Transverse colon (tissue), 4 donors: ENCODE measurements at regions of chr9 and their contacts with region 1.

Region 1: DNA sequence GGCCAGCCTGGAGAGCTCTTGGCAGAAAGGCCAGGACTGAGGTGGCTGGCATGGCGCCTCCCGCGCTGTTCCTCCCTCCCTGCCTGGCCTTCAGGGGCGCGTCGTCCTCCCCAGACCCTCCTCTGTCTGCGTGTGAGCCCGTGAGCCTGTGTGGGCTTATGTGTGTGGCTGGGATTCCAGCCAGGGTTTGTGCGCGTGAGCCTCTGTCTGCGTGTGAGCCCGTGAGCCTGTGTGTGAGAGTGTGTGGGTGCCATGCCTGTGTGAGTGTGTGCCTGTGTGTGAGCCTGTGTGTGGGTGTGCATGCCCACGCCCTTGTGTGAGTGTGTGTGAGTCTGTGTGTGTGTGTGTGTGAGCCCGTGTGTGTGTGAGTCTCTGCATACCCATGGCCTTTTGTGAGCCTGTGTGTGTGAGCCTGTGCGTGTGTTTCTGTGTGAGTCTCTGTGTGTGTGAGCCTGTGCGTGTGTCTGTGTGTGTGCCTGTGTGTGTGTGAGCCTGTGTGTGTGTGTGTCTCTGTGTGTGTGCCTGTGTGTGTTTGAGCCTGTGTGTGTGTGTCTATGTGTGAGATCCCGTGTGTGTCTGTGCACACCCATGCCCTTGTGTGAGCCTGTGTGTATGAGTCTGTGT is 13.0 kb downstream of the RXRA start:
- DNase-seq: no peak
- H3K4me3 ChIP-seq: peak overlapping the region in 1 of 4 donors; percentile 11
- H3K27ac ChIP-seq: peak overlapping the region; percentile 26 to 84 (median 38)
- H3K4me1 ChIP-seq: peaks cover 79 to 100% (median 95%) of the 10 kb centered on the region in 4 donors
- H3K27me3 ChIP-seq: no peaks in the 10 kb centered on the region
- CTCF ChIP-seq: no peak
- EP300 ChIP-seq: no peak
- POLR2A ChIP-seq: no peak

Region 2: GRCh38 chr9:134215699-134216448 is 123.4 kb before region 1 on chr9:
- in situ Hi-C with region 1: no loop called
- intact Hi-C with region 1: no loop called
- DNase-seq: no peak
- H3K4me3 ChIP-seq: no peak overlapping the region
- H3K27ac ChIP-seq: peak overlapping the region; percentile 67 to 80 (median 74)
- H3K4me1 ChIP-seq: peaks cover 0 to 11% (median 5%) of the 10 kb centered on the region in 4 donors
- H3K27me3 ChIP-seq: no peaks in the 10 kb centered on the region
- CTCF ChIP-seq: no peak
- EP300 ChIP-seq: no peak
- POLR2A ChIP-seq: no peak

Region 3: DNA sequence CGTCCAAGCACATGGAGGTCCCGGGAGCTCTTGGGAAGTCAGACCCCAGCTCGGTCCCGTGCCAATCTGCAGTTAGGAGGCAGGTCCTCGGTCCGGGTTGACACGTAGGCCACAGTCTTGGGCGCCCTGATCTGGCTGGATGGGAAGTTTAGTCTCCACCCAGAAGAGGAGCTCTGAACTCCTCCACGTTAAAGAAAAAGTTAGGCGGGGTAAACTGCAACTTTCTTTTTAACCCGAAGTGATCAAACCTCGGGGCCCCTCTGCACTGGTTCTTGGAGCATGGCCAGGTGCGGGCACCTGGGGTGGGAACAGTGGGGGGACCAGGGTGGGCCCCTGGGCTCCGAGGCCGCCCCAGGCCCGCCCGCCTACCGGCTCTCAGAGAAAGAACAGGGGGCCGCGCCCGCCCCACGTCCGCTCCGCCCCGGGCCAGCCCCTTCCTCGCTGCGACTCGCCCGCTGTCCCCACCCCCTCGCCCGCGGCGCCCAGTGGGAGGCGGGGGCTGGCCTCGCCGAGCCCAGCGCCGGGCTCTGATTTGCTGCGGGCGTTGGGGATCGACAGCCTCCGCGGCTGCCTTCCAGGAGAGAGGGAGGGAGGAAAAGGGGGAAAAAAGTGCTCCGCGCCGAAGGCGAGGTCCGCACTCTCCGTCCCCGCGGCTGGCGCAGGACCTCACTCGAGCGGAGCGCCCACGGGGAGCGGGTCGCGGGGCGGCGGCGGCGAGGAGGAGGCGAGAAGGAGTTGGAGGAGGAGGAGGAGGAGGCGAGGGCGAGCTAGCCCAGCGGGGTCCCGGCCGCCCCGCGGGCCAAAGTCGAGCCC is 302.1 kb after region 1 on chr9 and contains the start of gene COL5A1:
- in situ Hi-C with region 1: no loop called
- intact Hi-C with region 1: loop called (anchors 10 kb)
- DNase-seq: peak; percentile 80
- H3K4me3 ChIP-seq: peak within 1 kb of the TSS; percentile 46 to 59 (median 56)
- H3K27ac ChIP-seq: peak within 1 kb of the TSS; percentile 91 to 96 (median 93)
- H3K4me1 ChIP-seq: peaks cover 6 to 29% (median 13%) of the 10 kb centered on the region in 4 donors
- H3K27me3 ChIP-seq: peaks cover 32% of the 10 kb centered on the region
- CTCF ChIP-seq: peak; percentile 15 to 38 (median 19)
- EP300 ChIP-seq: no peak
- POLR2A ChIP-seq: peak; percentile 81
- total RNA-seq, gene COL5A1: 7.1 to 69.3 (median 16.1) TPM